Left ventricle myocardium superior (tissue), 1 donor: ENCODE measurements at regions of chr3 and their contacts with region 1.

Region 1: GRCh38 chr3:78519281-78519680 is 1248.5 kb downstream of the ROBO1 start:
- DNase-seq: no peak
- ATAC-seq: no peak

Region 2: GRCh38 chr3:78476076-78476475 is 43.2 kb before region 1 on chr3:
- intact Hi-C with region 1: loop called (anchors 2 kb)
- DNase-seq: no peak
- ATAC-seq: no peak

Region 3: DNA sequence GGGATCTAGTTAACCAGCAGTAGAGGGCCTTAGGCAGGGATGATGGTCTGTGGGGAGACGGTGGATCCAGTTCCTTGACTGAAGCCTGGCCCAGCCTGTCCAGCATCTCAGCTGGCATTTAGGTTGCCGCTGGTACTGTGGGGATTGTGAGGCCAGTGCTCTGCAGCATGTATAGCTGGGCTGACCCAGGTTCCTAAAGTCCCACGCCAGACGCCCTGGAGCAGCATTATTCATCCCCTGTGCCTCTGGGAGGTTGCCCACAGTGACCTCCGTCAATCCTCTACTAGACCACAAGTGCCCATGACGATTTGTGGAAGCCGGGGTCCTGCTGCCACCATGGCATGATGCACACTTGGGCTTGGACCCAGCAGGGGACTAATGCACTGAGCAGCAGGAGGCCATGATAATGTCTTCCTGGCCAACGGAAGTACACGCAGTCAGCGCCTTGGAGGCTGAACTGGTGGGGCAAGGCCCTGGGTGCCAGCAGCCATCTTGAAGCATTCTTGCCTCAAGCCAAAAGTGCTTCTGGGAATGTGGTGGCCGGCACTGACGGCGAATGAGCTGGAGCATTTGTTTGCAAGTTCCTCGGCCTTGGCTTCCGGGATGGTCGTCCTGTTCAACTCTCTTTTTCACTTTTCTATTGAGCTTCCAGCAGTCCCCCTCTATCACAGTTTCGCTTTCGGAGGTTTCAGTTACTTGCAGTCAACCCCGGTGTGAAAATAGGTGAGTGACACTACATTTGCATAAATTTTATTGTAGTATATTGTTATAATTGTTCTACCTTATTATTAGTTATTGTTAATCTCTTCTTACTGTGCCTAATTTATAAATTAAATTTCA is 299.1 kb after region 1 on chr3:
- intact Hi-C with region 1: no loop called
- DNase-seq: no peak
- ATAC-seq: no peak